Aorta (tissue), 5 donors: ENCODE measurements at regions of chr5 and their contacts with region 1.

Region 1: DNA sequence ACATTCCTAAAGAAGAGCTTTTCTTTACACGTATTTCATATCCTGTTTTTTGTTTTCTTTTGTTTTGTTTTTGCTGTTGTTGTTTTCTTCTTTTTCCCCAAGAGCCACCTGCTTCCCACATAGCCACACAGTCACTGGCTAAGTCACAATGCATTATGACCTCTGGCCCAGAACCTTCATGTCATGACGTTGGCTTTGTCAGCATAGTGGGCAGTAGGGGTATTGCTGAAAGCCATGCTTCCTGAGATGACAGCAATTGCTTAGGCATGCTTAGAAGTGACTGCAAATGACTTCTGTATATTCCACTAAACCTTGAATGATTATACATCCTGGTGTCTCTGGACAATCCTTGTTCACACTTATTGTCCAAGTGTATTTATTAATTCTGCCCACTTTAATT is 375.8 kb downstream of the TAF11L14 start:
- DNase-seq: no peak
- ATAC-seq: no peak
- H3K4me3 ChIP-seq: no peak overlapping the region
- H3K27ac ChIP-seq: no peak overlapping the region
- H3K4me1 ChIP-seq: no peaks in the 10 kb centered on the region
- H3K27me3 ChIP-seq: no peaks in the 10 kb centered on the region

Region 2: DNA sequence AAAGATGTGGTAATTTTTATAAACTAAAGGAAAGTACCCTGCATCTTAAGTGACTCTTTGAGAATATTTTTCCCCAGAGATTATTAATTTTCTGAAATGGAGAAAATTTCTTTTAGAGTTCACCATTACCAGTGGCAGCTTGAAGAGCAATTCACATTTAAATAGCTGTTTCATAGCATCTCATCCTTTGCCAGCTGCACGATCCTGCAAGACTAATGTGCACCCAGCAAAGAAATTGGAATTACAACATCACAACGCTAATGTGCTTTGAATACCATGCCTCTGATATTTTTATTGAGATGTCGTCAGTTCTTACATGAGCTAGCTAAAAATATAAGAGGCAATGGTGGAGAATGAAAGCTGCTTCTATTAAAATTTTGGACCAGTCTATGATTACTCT is 47.7 kb after region 1 on chr5:
- intact Hi-C with region 1: loop called in 1 of 2 experiments (anchors 2 kb)
- DNase-seq: no peak
- ATAC-seq: no peak
- H3K4me3 ChIP-seq: no peak overlapping the region
- H3K27ac ChIP-seq: no peak overlapping the region
- H3K4me1 ChIP-seq: no peaks in the 10 kb centered on the region
- H3K27me3 ChIP-seq: no peaks in the 10 kb centered on the region

Region 3: GRCh38 chr5:18181575-18181974 is 171.5 kb after region 1 on chr5:
- intact Hi-C with region 1: no loop called
- DNase-seq: no peak
- ATAC-seq: no peak
- H3K4me3 ChIP-seq: no peak overlapping the region
- H3K27ac ChIP-seq: no peak overlapping the region
- H3K4me1 ChIP-seq: no peaks in the 10 kb centered on the region
- H3K27me3 ChIP-seq: no peaks in the 10 kb centered on the region